Activated naive CD4-positive, alpha-beta T cell treated with anti-CD3 and anti-CD28 coated beads for 36 hours (primary cell): ENCODE measurements at regions of chr18 and their contacts with region 1.

Region 1: DNA sequence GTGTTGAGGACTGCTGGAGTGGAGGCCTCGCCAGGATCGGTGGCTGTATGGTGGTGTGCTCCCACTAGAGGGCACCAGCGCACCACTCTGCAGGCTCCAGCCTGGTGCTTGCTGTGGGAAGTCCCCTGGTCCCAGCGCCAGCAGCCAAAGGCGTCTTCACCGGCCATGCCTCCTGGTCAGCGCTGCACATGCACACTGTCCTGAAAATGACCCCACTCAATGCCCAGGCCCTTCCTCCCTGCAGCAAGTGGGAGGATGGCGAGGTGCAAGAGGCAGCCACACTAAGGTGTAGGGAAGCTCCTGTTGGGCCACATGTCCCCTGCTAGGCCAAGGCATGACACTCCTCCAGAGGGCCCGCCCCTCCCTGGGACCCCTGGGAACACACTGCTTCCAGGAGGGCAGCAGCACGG is 136.5 kb downstream of the CTIF start:
- DNase-seq: peak; percentile 87
- H3K4me3 Mint-ChIP-seq: no peak overlapping the region
- H3K27ac Mint-ChIP-seq: no peak overlapping the region
- H3K4me1 Mint-ChIP-seq: no peaks in the 10 kb centered on the region
- H3K27me3 Mint-ChIP-seq: no peaks in the 10 kb centered on the region

Region 2: DNA sequence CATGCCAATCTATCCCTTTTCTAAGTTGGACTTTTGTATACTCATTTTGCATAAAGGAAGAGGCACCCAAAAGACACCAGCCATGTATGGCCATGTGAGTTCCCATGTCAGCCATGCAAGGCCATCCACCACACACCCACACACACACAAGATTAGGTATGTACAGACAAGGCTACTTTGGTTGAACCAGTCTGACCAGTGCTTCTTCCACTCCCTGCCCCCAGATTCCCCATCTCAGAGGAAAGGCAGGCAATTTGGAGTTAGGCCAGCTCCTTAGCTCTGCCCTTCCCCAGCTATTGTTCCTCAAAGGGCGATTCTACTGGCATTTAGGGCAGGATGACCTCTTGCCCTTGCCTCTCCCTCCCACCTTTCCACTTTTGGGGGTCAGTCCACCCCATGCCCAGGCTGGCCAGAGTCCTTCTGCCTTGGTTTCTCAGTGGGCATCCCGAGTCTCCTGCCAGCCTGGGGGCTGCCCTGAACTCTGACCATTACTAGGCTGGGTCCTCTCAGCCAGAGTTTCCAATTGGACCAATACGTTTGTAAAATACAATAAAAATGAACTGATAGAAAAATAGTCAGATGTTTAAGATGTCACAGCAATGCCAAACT is 367.2 kb before region 1 on chr18:
- CTCF ChIA-PET with region 1: no interaction called
- intact Hi-C with region 1: no loop called
- DNase-seq: no peak
- H3K4me3 Mint-ChIP-seq: no peak overlapping the region
- H3K27ac Mint-ChIP-seq: no peak overlapping the region
- H3K4me1 Mint-ChIP-seq: no peaks in the 10 kb centered on the region
- H3K27me3 Mint-ChIP-seq: no peaks in the 10 kb centered on the region

Region 3: DNA sequence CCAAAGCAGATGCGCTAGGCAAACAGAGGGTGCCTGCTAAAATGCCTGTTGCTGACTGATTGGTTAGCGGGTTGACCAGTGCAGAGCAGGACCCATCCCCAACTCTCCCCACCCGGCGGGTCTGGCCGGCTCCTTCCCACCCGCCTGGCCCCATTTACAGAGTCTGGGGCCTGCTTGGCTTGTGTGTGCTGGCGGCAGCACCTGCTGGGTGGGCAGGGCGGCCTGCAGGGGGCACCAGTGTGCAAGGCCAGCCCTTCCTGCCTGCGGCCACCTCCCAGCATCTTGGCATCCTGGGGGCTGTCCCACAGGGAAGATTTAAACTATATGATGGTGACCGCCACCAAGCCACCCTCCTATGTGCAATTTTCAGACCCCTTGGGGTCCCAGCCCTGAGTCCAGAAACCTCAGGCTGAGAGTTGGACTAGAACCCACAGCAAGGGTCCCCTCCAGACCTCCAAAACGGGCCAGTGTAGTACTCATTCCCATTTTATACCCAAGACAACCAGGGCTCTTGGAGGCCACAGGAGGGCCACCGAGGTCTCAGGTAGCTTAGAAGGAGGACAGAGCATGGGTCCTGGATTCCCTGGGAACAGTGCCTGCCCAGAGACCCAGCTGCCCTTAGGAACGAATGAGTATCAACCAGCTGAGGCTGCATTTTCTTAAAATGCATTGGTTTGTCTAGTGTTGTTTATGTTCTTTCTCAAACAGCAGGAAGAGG is 101.8 kb after region 1 on chr18:
- CTCF ChIA-PET with region 1: no interaction called
- intact Hi-C with region 1: loop called (anchors 2 kb)
- DNase-seq: peak; percentile 71
- H3K4me3 Mint-ChIP-seq: no peak overlapping the region
- H3K27ac Mint-ChIP-seq: no peak overlapping the region
- H3K4me1 Mint-ChIP-seq: peaks cover 3% of the 10 kb centered on the region
- H3K27me3 Mint-ChIP-seq: no peaks in the 10 kb centered on the region

Region 4: DNA sequence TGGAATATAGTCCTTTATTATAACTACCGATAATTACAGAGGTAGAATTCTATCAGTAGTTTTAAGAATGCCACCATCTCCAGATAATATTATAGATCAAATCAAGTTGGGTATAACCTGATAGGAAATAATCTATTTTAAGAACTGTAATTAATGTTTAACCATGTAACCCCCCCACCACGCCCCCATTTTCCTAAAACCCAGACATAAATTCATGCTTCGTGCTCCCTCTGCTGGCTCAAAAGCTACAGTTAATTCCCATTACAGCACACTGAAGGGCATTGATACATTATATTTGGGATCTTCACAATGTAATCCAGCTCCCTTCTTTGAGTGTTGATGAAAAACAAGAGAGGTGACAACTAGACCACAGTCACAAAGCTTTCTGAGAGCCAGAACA is 503.4 kb after region 1 on chr18:
- CTCF ChIA-PET with region 1: interaction called, 4 read pairs
- intact Hi-C with region 1: loop called (anchors 1 kb)
- DNase-seq: peak; percentile 20
- H3K4me3 Mint-ChIP-seq: no peak overlapping the region
- H3K27ac Mint-ChIP-seq: no peak overlapping the region
- H3K4me1 Mint-ChIP-seq: peaks cover 15% of the 10 kb centered on the region
- H3K27me3 Mint-ChIP-seq: no peaks in the 10 kb centered on the region

Region 5: GRCh38 chr18:49412679-49413078 is 737.3 kb after region 1 on chr18:
- CTCF ChIA-PET with region 1: no interaction called
- intact Hi-C with region 1: loop called (anchors 1 kb)
- DNase-seq: no peak
- H3K4me3 Mint-ChIP-seq: no peak overlapping the region
- H3K27ac Mint-ChIP-seq: peak overlapping the region; percentile 79
- H3K4me1 Mint-ChIP-seq: peaks cover 35% of the 10 kb centered on the region
- H3K27me3 Mint-ChIP-seq: no peaks in the 10 kb centered on the region

Region 6: DNA sequence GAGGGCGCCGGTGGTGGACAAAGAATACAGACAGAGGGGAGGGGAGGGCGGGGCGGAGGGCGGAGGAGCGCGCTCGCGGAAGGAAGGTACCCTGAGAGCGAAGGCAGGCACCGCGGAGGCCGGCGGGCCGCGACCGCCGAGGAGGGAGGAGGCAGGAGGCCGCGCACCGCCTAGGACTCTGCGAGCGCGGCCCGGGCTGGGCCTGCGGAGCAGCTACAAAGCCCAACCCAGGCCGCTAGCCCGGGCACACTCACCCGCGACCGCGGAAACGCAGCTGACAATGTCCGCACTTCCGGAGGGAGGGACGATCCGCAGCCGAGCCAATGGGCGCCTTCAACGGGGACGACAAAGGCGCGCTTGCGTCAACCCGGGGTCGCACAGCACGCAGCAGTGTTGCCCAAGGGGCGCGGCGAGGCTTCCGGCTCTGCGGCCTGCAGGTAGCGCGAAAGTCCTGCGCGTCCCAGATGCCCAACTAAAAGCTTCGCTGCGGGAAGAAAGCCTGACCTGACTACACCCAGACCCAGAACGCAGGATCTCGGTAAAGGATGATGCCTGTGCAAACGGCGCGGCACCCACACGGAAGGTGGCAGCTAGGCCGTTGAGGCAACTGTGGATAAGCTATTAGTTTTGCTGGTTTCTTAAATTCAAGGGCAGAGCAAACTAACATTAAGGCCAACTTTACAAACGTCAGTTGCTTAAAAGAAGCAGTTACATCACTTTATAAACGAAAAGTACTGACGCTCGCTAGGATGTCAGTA is 811.8 kb after region 1 on chr18 and contains the start of gene C18orf32:
- CTCF ChIA-PET with region 1: no interaction called
- intact Hi-C with region 1: loop called (anchors 5 kb)
- DNase-seq: peak; percentile 94
- H3K4me3 Mint-ChIP-seq: peak within 1 kb of the TSS; percentile 94
- H3K27ac Mint-ChIP-seq: peak within 1 kb of the TSS; percentile 94
- H3K4me1 Mint-ChIP-seq: peaks cover 63% of the 10 kb centered on the region
- H3K27me3 Mint-ChIP-seq: no peaks in the 10 kb centered on the region
- total RNA-seq, gene C18orf32: 24.1 to 26.6 TPM

Region 7: DNA sequence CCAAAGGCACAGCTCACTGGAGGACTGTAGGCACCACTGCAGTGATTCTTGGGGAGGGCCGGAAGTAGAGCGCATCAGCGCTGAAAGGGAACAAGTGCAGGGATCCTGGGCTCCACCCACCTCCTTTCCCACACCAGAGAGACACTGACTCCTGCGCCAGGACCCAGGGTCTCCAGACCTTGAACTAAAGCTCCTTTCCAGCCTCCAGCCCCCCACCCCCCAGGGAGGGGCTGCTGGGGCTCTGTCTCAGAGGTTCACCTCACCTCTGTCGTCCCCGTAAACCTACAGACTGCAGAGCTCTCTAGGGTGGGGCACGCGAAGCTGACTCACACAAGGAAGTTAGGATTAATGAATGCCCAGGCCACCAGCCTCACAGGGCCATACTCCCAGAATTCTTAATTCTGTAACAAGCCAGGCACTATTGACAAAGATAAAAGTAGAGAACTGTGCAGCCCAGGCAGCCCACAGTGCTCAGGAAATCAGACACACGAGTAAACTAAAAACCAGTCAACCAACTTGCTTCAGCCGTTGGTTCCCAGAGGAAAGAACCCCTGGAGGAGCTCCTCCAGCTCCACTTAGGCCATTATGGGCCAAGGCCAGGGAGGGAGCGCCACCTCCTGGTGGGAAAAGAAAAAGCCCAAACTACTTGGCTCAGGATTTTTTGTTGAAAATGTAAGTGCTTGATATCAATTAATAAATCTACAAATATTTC is 1183.1 kb after region 1 on chr18:
- CTCF ChIA-PET with region 1: no interaction called
- intact Hi-C with region 1: loop called (anchors 1 kb)
- DNase-seq: peak; percentile 73
- H3K4me3 Mint-ChIP-seq: no peak overlapping the region
- H3K27ac Mint-ChIP-seq: no peak overlapping the region
- H3K4me1 Mint-ChIP-seq: no peaks in the 10 kb centered on the region
- H3K27me3 Mint-ChIP-seq: no peaks in the 10 kb centered on the region